PC-3 (cell line): ENCODE measurements at regions of chr3 and their contacts with region 1.

Region 1: GRCh38 chr3:55858302-55858701 is 371.2 kb upstream of the WNT5A start:
- DNase-seq: no peak
- ATAC-seq: peak; percentile 67
- H3K4me3 ChIP-seq: no peak overlapping the region
- H3K27ac ChIP-seq: no peak overlapping the region
- H3K4me1 ChIP-seq: no peaks in the 10 kb centered on the region
- H3K27me3 ChIP-seq: no peaks in the 10 kb centered on the region
- CTCF ChIP-seq: no peak

Region 2: DNA sequence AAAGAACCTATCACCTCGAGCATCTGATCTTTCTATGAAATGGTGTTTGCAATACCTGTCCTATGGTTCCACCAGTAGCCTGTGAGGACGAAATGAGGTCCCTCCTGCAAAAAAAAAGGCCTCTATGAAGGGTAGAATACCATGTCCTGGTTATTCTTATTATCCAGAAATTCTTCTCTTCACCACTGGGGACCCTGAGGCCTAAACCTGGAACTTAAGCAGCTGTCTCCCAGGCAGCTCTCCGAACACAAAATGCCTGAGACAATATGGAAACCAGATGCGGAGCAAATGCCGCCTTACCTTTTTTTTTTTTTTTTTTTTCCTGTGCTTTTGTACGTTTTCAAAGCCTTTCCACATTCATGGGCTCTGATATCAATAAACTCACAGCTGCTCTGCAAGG is 309.1 kb before region 1 on chr3:
- CTCF ChIA-PET with region 1: interaction called, 10 read pairs
- POLR2A ChIA-PET with region 1: no interaction called
- intact Hi-C with region 1: no loop called
- DNase-seq: peak; percentile 29
- ATAC-seq: peak; percentile 76
- H3K4me3 ChIP-seq: no peak overlapping the region
- H3K27ac ChIP-seq: no peak overlapping the region
- H3K4me1 ChIP-seq: peaks cover 2% of the 10 kb centered on the region; the same call in 1 of the 2 replicates
- H3K27me3 ChIP-seq: no peaks in the 10 kb centered on the region
- CTCF ChIP-seq: peak; percentile 36; the same call in 1 of the 2 replicates